ENCODE measurements at regions of chr19 and their contacts with region 1.

Region 1: GRCh38 chr19:7098701-7099596 is 29.4 kb downstream of the ZNF557 start:
- DNase-seq: peak; percentile 95
- ATAC-seq: peak; percentile 88
- H3K4me3 Mint-ChIP-seq: peak overlapping the region; percentile 75
- H3K27ac Mint-ChIP-seq: peak overlapping the region; percentile 78
- H3K4me1 Mint-ChIP-seq: peaks cover 13% of the 10 kb centered on the region
- H3K27me3 Mint-ChIP-seq: peaks cover 7% of the 10 kb centered on the region
- CTCF ChIP-seq: no peak

Region 2: GRCh38 chr19:7069042-7069903 is 29.7 kb before region 1 on chr19 and contains the start of gene ZNF557:
- CTCF ChIA-PET with region 1: interaction called, 11 read pairs
- POLR2A ChIA-PET with region 1: interaction called, 4 read pairs
- DNase-seq: peak; percentile 99
- ATAC-seq: peak; percentile 100
- H3K4me3 Mint-ChIP-seq: peak within 1 kb of the TSS; percentile 94
- H3K27ac Mint-ChIP-seq: peak within 1 kb of the TSS; percentile 91
- H3K4me1 Mint-ChIP-seq: no peaks in the 10 kb centered on the region
- H3K27me3 Mint-ChIP-seq: no peaks in the 10 kb centered on the region
- CTCF ChIP-seq: no peak
- total RNA-seq, gene ZNF557: 6.7 to 7.5 TPM (median 7.5 TPM) in 3 replicates

Region 3: GRCh38 chr19:7340959-7341837 is 242.2 kb after region 1 on chr19:
- CTCF ChIA-PET with region 1: interaction called, 33 read pairs
- POLR2A ChIA-PET with region 1: interaction called, 5 read pairs
- DNase-seq: peak; percentile 94
- ATAC-seq: peak; percentile 91
- H3K4me3 Mint-ChIP-seq: no peak overlapping the region
- H3K27ac Mint-ChIP-seq: peak overlapping the region; percentile 90
- H3K4me1 Mint-ChIP-seq: peaks cover 6% of the 10 kb centered on the region; the same call in 1 of the 2 replicates
- H3K27me3 Mint-ChIP-seq: no peaks in the 10 kb centered on the region
- CTCF ChIP-seq: peak; percentile 95